Activated CD4-positive, alpha-beta T cell treated with anti-CD3 and anti-CD28 coated beads for 36 hours (primary cell): ENCODE measurements at regions of chr6 and their contacts with region 1.

Region 1: DNA sequence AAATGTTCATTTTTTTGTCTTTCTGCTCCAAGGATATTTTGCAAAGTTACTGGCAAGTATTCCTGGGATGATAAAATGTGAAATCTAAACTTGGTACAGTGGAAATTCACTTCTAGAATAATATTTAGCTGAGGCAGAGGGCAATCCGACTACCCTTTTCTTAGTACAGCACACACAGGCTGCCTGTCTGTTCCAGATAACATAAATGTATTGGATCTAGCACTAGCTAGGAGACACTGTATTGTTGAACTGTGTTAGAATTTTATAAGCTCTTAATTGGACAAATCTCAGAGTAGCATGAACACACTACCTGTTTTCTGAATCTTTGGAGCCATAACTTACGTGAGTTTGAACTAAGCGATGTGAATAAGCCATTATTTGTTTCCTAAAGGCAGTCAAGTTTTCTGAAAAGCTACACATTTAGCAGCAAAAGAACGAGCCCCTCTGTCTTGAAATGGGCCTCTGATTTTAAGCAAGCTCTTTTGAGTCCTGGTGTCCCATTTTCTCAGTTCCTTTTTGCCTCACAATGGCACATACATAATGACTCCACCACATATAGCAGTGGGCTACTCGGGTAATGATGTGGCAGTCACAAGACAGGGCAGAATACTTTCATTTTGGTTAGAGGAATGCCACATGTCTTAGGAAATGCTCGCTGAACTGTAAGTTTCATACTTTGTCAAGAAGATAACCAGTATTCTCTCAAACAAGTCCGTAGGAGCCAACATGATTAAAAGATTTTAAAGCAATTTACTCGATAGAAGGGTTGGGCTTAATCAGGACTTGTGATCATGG is 116.5 kb upstream of the ESR1 start:
- DNase-seq: peak; percentile 57
- ATAC-seq: peak; percentile 94
- H3K4me3 Mint-ChIP-seq: peak overlapping the region; percentile 66
- H3K27ac Mint-ChIP-seq: peak overlapping the region; percentile 82
- H3K4me1 Mint-ChIP-seq: peaks cover 22% of the 10 kb centered on the region
- H3K27me3 Mint-ChIP-seq: peaks cover 8% of the 10 kb centered on the region

Region 2: DNA sequence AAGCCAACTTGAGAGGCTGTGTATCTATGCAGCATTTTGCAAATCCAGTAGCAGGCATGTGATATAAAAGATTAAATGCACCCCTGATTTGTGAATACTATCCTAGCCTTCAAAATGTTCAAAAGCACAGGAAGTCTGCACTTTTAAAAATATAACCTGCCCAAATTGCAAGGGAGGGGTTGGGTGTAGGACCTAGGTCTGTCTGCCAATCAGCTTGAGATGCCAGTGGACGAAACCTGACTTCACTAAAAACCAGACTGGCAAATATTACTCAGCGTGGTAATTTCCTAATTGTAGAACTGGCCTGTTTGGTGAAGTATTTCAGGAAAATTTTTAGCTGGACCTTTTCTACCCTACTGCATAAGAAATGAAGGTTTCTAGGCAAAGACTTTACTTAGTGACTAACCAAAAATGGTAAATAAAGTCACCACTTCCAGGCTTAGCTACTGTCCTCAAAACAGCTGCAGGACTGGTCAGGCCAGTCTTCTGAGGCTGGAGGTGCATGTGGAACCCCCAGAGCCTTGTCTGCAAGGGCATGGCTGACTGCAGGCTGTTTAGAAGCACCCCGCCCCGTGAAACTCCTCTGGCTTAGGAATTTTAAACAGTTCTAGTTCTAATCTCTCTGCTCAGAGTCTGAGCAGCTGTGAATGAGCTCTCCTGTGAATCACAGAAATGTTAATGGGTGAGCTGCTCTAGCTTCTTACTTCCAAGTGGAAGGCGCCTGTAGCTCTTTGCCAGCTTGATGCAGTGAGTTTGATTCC is 12.1 kb after region 1 on chr6:
- CTCF ChIA-PET with region 1: interaction called, 5 read pairs
- POLR2A ChIA-PET with region 1: interaction called, 8 read pairs
- intact Hi-C with region 1: loop called (anchors 1 kb)
- DNase-seq: no peak
- ATAC-seq: peak; percentile 11
- H3K4me3 Mint-ChIP-seq: no peak overlapping the region
- H3K27ac Mint-ChIP-seq: peak overlapping the region; percentile 35
- H3K4me1 Mint-ChIP-seq: peaks cover 36% of the 10 kb centered on the region
- H3K27me3 Mint-ChIP-seq: peaks cover 7% of the 10 kb centered on the region

Region 3: DNA sequence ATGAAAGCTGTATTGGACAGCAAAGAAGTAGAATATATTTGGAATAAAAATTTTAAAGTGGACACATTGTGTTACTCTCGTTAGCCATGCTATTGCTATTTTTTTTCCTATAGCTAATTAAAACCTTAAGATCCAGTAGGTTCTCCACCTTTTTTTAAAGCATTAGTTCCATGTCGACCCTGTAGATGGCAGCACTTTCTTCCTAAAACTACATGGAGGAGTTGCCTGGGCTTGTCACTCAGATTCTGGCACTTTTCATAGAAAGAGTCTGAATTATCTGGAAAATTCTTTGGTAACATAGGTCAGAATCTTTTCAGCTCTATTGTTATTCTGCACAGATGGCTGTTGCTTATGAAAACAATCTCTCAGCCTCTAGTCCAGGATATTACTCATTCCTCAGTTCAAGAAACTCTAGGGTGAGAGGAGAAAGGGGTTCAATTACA is 74.5 kb after region 1 on chr6:
- CTCF ChIA-PET with region 1: interaction called, 17 read pairs
- POLR2A ChIA-PET with region 1: no interaction called
- intact Hi-C with region 1: no loop called
- DNase-seq: peak; percentile 57
- ATAC-seq: peak; percentile 50
- H3K4me3 Mint-ChIP-seq: no peak overlapping the region
- H3K27ac Mint-ChIP-seq: no peak overlapping the region
- H3K4me1 Mint-ChIP-seq: peaks cover 15% of the 10 kb centered on the region
- H3K27me3 Mint-ChIP-seq: peaks cover 9% of the 10 kb centered on the region

Region 4: DNA sequence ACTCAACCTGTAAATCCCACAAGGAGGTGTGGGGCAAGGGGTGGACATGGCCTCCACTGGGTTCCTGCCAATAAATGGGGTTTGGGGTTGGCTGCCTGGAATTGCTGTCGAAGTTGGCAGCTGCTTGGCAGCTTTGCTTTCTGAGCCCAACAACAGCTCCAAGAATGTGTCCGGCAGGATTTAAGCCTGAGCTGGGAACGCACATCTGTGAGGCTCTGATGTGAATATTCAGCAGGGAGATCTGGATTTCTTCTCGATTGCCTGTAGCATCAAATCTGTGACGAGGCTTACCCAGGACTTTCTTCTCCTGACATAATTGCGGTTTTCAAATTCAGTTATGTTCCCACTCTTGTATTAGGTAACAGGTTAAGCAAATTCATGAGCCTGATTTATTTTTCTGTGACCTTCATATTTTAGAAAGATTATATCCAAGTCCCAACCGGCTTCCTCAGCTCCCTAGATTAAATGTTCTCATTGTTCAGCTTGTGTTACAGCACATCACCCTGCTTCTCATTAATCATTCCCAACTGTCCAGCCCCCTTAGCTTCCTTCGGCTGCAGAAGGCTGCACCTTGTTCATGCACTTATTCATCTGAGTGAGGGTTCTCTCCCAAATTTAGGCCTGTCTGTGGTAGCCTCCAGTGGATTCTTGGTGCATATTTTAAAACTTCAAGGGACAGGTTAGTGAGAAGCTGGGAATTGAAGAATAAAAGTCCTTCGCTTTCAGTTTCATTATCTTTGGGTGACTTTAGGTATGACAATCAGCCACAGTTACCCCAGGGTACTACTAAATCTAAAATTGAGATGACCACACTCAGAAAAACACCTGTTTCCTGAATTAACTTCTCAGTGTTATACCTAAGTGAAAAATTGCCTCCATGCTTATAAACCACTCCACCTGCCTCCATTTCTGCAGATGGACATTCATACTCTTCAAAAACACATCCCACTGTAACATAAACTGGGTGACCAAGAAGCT is 426.5 kb after region 1 on chr6:
- CTCF ChIA-PET with region 1: no interaction called
- POLR2A ChIA-PET with region 1: no interaction called
- intact Hi-C with region 1: loop called in 1 of 2 experiments (anchors 5 kb)
- DNase-seq: no peak
- ATAC-seq: no peak
- H3K4me3 Mint-ChIP-seq: no peak overlapping the region
- H3K27ac Mint-ChIP-seq: no peak overlapping the region
- H3K4me1 Mint-ChIP-seq: peaks cover 8% of the 10 kb centered on the region
- H3K27me3 Mint-ChIP-seq: no peaks in the 10 kb centered on the region

Region 5: DNA sequence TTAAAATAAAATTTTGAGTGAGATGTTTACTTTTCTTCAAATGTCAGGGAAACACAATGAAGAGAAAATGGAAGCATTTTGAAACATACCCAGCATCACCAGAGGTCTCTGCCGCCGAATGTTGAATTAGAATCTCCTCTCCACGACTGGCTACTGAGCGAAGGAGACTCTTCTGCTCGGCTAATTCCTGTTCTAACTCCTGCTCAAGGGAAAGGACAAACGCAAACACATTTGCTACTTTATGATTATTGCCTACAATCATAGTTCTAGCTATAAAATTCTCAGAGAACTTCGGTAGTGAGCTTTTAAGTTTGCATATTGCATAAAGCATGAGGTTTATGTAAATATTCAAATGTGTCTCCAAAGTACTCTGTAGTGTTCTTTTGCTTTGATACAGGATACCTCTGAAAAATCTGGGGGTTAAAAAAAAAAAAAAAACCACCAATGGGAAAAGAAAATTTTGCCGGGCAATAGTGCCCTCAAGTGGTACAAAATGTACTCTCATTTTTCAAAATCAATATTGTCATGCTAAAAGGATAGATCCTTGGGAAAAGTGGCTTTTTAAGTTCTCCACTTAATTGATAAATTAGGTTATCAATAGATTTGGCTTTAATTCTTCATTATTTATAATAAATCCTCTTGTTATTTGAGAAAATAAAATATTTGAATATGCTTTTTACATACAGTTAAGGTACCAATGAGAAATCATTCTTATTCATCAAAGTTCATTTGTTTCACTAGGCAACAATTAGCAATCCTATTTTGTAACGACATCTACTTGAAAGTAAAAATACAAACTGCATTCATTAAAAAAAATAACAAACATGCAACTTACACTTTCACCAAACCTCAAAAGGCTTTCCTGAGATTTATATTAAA is 577.2 kb after region 1 on chr6:
- CTCF ChIA-PET with region 1: interaction called, 6 read pairs
- POLR2A ChIA-PET with region 1: no interaction called
- intact Hi-C with region 1: loop called (anchors 5 kb)
- DNase-seq: peak; percentile 42
- ATAC-seq: no peak
- H3K4me3 Mint-ChIP-seq: no peak overlapping the region
- H3K27ac Mint-ChIP-seq: no peak overlapping the region
- H3K4me1 Mint-ChIP-seq: peaks cover 11% of the 10 kb centered on the region
- H3K27me3 Mint-ChIP-seq: no peaks in the 10 kb centered on the region